Gastrocnemius medialis (tissue), 4 donors: ENCODE measurements at regions of chr4 and their contacts with region 1.

Region 1: DNA sequence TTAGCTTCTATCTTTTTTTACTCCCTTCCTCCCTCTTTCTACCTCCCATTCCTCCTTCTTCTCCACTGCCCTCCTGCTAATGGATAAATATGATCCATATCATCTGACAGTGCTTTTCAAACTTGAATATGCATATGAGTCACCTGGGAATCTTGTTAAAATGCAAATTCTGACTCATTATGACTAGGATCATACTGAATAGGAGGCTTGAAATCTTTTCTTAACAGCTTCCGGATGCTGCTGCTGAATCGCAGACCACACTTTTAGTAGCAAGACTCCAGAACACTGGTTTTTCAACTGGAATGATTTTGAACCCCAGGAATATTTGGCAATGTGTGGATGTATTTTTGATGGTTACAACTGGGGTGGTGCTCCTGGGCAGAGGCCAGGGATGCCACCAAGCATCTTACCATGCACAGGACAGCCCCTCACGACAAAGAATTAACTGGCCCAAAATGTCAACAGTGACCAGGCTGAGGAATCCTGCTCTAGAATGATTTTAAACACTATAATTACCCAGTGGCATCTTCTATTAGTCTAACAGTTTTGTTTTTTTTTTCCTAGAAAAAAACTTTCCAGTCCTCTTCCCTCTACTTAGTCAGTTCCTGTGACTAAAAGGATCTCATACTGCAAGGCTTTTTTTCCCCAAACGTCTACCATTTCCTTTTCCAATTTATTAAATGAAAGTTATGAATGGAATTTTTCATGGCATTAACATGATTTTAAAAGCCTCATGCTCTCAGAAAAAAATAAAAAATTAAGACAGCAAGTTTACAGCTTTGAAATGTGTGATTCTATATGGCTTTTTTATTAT is 10.6 kb upstream of the PYURF start:
- DNase-seq: no peak
- ATAC-seq: no peak
- H3K4me3 ChIP-seq: no peak overlapping the region
- H3K27ac ChIP-seq: no peak overlapping the region
- H3K4me1 ChIP-seq: peaks cover 0 to under 1% of the 10 kb centered on the region in 2 donors
- H3K27me3 ChIP-seq: no peaks in the 10 kb centered on the region
- CTCF ChIP-seq: no peak
- POLR2A ChIP-seq: no peak

Region 2: GRCh38 chr4:88659055-88659889 is 125.1 kb after region 1 on chr4:
- in situ Hi-C with region 1: loop called (anchors 5 to 10 kb)
- intact Hi-C with region 1: loop called (anchors 1 kb)
- DNase-seq: peak; percentile 40 to 48
- ATAC-seq: peak; percentile 97 to 98
- H3K4me3 ChIP-seq: no peak overlapping the region
- H3K27ac ChIP-seq: peak overlapping the region in 3 of 4 donors; percentile 9 to 40 (median 32)
- H3K4me1 ChIP-seq: peaks cover 0 to 10% of the 10 kb centered on the region in 2 donors
- H3K27me3 ChIP-seq: no peaks in the 10 kb centered on the region
- CTCF ChIP-seq: peak; percentile 70 to 83 (median 74)
- POLR2A ChIP-seq: no peak

Region 3: GRCh38 chr4:89024051-89024675 is 490.0 kb after region 1 on chr4:
- in situ Hi-C with region 1: loop called in 3 of 4 experiments (anchors 10 to 25 kb)
- intact Hi-C with region 1: loop called (anchors 5 kb)
- DNase-seq: peak; percentile 31 to 42
- ATAC-seq: peak; percentile 97 to 100
- H3K4me3 ChIP-seq: no peak overlapping the region
- H3K27ac ChIP-seq: no peak overlapping the region
- H3K4me1 ChIP-seq: peaks cover 8 to 15% of the 10 kb centered on the region in 2 donors
- H3K27me3 ChIP-seq: no peaks in the 10 kb centered on the region
- CTCF ChIP-seq: peak; percentile 83 to 92 (median 86)
- POLR2A ChIP-seq: no peak

Region 4: GRCh38 chr4:89029591-89029990 is 495.4 kb after region 1 on chr4:
- in situ Hi-C with region 1: loop called in 3 of 4 experiments (anchors 10 to 25 kb)
- intact Hi-C with region 1: loop called (anchors 5 kb)
- DNase-seq: no peak
- ATAC-seq: no peak
- H3K4me3 ChIP-seq: no peak overlapping the region
- H3K27ac ChIP-seq: no peak overlapping the region
- H3K4me1 ChIP-seq: peaks cover 0 to 5% of the 10 kb centered on the region in 2 donors
- H3K27me3 ChIP-seq: no peaks in the 10 kb centered on the region
- CTCF ChIP-seq: no peak
- POLR2A ChIP-seq: no peak